Activated CD4-positive, alpha-beta memory T cell treated with anti-CD3 and anti-CD28 coated beads for 36 hours (primary cell): ENCODE measurements at regions of chr16 and their contacts with region 1.

Region 1: DNA sequence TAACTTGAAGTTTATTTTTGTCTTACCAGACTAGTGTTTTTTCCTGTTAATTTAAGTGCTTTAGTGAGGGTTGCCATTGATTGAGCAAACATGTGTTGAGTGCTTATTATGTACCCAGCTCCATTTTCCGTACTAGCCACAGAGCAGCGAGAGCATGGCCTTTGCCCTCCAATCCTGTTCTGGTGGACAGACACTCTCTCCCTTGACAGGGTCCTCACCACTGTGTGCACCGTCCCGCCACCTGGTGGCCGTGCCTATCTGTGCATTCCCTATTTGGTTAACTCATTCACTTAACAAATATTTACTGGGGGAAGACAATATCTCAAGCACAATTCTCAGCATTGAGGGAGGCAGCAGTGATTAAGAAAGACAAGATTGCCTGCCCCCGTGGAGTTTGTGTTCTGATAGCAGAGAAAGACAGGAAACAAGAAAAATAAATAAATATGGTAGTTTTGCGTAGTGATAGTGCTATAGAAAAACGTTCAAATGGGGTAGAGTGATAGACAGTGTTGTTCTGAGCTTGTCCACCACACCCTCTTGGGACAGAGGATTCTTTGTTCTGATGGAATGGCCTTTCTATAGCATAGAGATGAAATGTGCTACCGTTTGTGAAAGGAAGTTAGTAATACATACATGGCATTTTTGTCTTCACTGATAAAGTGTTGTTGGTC is 13.0 kb downstream of the CDH13 start:
- DNase-seq: peak; percentile 62
- H3K4me3 Mint-ChIP-seq: no peak overlapping the region
- H3K27ac Mint-ChIP-seq: no peak overlapping the region
- H3K4me1 Mint-ChIP-seq: peaks cover 12% of the 10 kb centered on the region
- H3K27me3 Mint-ChIP-seq: no peaks in the 10 kb centered on the region

Region 2: DNA sequence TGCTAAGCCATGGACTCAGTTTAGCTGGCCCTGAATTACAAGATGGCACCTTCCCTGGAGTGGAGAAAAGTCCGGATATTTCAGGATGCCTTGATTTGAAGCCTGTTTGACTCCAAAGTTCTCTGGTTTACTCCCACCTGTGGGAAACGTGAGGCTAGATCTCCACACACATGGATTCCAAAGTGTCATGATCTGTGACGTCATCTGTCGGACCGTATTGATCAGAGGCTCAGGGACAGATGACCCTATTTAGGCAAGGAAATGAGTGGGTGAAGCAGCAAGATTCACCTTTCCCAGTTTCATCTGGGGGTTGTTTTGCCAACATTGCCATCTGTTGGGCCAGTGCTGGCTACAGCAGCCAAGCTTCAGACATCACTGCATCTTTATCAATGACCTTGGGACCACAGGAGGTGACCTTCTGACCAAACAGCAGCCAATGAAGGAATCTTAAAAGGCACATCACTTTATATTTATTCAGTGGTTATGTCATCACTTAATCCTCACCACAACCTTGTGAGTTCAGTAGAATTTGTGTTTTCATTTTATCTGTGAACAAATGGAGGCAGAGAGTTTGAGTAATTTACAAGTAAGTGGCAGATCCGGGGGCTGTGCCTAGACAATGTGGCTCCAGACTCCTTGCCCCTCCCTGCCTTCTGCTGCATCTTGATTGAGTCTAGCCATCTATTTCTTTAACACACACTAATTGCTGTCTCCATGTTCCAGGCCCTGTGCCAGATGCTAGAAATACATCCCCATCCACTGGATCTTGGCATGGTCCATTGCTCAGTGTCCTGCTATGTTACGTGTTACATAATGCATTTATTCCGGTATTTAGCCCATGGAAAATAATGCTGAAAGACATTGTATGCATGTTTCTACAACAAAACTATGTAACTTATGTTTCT is 14.5 kb before region 1 on chr16:
- CTCF ChIA-PET with region 1: no interaction called
- POLR2A ChIA-PET with region 1: no interaction called
- intact Hi-C with region 1: no loop called
- DNase-seq: no peak
- H3K4me3 Mint-ChIP-seq: no peak overlapping the region
- H3K27ac Mint-ChIP-seq: no peak overlapping the region
- H3K4me1 Mint-ChIP-seq: peaks cover 2% of the 10 kb centered on the region
- H3K27me3 Mint-ChIP-seq: peaks cover 51% of the 10 kb centered on the region

Region 3: DNA sequence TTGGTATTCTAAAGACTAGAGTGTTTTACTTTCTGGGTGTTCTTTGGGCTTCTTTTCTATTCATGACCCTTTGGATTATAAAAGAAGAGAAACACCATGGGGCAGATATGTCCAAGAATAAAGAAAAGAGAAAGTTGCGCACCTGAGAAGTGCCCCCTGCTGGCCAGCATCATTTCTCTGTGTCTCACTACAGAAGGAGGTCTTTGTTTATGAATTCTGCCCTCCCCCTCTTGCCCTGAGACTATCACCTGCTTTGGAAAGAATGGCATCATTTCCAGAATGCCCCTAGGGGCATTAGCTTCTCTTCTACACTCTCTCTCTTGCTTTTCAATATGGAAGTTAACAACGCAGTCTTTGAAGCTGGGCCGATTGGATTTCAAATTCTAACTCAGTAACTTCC is 31.9 kb after region 1 on chr16:
- CTCF ChIA-PET with region 1: interaction called, 15 read pairs
- POLR2A ChIA-PET with region 1: no interaction called
- intact Hi-C with region 1: loop called (anchors 1 kb)
- DNase-seq: peak; percentile 54
- H3K4me3 Mint-ChIP-seq: no peak overlapping the region
- H3K27ac Mint-ChIP-seq: no peak overlapping the region
- H3K4me1 Mint-ChIP-seq: no peaks in the 10 kb centered on the region
- H3K27me3 Mint-ChIP-seq: no peaks in the 10 kb centered on the region

Region 4: DNA sequence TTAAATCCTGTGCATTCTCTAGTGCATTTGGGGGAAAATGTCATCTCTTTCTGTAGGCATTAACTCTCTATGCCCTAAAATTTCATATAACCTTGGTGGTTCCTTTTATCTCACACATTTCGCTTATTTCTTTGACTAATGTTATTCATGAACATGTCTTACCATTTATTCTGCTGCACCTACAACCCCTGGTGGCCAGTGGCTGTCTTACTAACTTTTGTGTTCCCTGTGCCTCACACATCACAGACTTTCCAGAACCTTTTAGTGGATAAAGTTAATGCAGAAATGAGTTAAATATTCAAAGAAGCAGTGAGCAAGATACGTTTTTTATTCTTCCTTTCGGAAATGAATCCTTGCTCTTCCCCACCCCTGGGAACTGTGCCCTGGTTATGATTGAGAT is 98.9 kb after region 1 on chr16:
- CTCF ChIA-PET with region 1: interaction called, 4 read pairs
- POLR2A ChIA-PET with region 1: no interaction called
- intact Hi-C with region 1: loop called (anchors 5 kb)
- DNase-seq: no peak
- H3K4me3 Mint-ChIP-seq: no peak overlapping the region
- H3K27ac Mint-ChIP-seq: no peak overlapping the region
- H3K4me1 Mint-ChIP-seq: no peaks in the 10 kb centered on the region
- H3K27me3 Mint-ChIP-seq: peaks cover 2% of the 10 kb centered on the region

Region 5: GRCh38 chr16:83215406-83216001 is 575.7 kb after region 1 on chr16:
- CTCF ChIA-PET with region 1: no interaction called
- POLR2A ChIA-PET with region 1: no interaction called
- intact Hi-C with region 1: loop called (anchors 10 kb)
- DNase-seq: peak; percentile 68
- H3K4me3 Mint-ChIP-seq: no peak overlapping the region
- H3K27ac Mint-ChIP-seq: no peak overlapping the region
- H3K4me1 Mint-ChIP-seq: no peaks in the 10 kb centered on the region
- H3K27me3 Mint-ChIP-seq: no peaks in the 10 kb centered on the region